ENCODE measurements at regions of chr15 and their contacts with region 1.

Region 1: DNA sequence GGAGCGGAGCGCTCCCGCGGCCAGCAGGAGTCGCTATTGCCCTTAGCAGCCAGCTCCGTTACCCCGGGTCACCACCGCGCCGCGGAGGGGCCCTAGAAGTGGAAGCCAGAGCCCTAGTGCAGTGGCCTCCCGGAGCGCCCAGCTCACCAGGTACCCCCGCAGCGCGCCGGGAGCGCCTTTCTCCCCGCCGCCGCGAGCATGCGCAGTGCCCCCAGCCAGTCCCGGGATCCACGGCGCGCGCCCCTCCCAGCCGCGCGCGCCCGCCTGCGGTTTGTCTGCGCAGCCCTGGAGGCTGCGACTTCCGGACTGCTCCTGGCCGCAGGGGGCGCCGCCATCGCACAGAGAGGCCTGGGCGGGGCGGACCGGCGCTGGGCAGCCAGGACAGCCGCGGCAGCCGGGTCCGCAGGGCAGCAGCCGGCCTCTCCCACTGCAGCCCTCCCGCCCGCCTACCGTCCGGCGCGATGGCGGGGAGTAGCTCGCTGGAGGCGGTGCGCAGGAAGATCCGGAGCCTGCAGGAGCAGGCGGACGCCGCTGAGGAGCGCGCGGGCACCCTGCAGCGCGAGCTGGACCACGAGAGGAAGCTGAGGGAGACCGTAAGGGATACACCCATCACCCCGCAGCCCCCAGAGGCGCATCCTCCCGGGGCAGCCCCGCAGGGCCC is 5.7 kb downstream of the TPM1 start:
- DNase-seq: peak; percentile 84
- H3K4me3 Mint-ChIP-seq: peak overlapping the region; percentile 84
- H3K27ac Mint-ChIP-seq: peak overlapping the region; percentile 17
- H3K4me1 Mint-ChIP-seq: peaks cover 20% of the 10 kb centered on the region
- H3K27me3 Mint-ChIP-seq: peaks cover 30% of the 10 kb centered on the region

Region 2: GRCh38 chr15:63015618-63016017 is 32.6 kb before region 1 on chr15:
- CTCF ChIA-PET with region 1: interaction called, 10 read pairs
- intact Hi-C with region 1: no loop called
- DNase-seq: no peak
- H3K4me3 Mint-ChIP-seq: no peak overlapping the region
- H3K27ac Mint-ChIP-seq: no peak overlapping the region
- H3K4me1 Mint-ChIP-seq: no peaks in the 10 kb centered on the region
- H3K27me3 Mint-ChIP-seq: peaks cover 3% of the 10 kb centered on the region

Region 3: DNA sequence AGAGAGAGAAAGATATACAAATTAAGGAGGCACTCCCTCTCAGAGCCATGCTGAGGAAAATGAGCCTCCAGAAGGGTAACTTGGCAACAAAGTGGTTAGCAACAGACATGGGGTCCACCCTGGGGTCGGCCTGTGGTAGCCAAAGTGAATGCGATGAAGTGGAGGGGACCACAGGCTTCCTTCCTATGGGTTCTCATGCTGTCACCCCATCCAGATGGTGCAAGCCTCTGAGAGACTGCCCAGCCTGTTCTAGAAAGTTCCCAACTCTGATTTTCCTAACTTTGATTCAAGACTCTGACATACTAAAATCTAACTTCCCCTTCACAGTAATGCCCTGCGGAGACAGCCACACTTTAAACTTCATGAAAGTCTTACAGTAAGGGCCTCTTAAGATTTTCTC is 55.2 kb after region 1 on chr15:
- CTCF ChIA-PET with region 1: no interaction called
- intact Hi-C with region 1: no loop called
- DNase-seq: no peak
- H3K4me3 Mint-ChIP-seq: no peak overlapping the region
- H3K27ac Mint-ChIP-seq: no peak overlapping the region
- H3K4me1 Mint-ChIP-seq: no peaks in the 10 kb centered on the region
- H3K27me3 Mint-ChIP-seq: peaks cover 11% of the 10 kb centered on the region

Region 4: GRCh38 chr15:63121382-63122001 is 73.2 kb after region 1 on chr15 and contains the start of gene LACTB:
- CTCF ChIA-PET with region 1: interaction called, 5 read pairs
- intact Hi-C with region 1: loop called (anchors 1 kb)
- DNase-seq: peak; percentile 86
- H3K4me3 Mint-ChIP-seq: peak within 1 kb of the TSS; percentile 71
- H3K27ac Mint-ChIP-seq: peak within 1 kb of the TSS; percentile 61
- H3K4me1 Mint-ChIP-seq: peaks cover 14% of the 10 kb centered on the region
- H3K27me3 Mint-ChIP-seq: no peaks in the 10 kb centered on the region
- total RNA-seq, gene LACTB: 18.3 to 18.7 TPM

Region 5: DNA sequence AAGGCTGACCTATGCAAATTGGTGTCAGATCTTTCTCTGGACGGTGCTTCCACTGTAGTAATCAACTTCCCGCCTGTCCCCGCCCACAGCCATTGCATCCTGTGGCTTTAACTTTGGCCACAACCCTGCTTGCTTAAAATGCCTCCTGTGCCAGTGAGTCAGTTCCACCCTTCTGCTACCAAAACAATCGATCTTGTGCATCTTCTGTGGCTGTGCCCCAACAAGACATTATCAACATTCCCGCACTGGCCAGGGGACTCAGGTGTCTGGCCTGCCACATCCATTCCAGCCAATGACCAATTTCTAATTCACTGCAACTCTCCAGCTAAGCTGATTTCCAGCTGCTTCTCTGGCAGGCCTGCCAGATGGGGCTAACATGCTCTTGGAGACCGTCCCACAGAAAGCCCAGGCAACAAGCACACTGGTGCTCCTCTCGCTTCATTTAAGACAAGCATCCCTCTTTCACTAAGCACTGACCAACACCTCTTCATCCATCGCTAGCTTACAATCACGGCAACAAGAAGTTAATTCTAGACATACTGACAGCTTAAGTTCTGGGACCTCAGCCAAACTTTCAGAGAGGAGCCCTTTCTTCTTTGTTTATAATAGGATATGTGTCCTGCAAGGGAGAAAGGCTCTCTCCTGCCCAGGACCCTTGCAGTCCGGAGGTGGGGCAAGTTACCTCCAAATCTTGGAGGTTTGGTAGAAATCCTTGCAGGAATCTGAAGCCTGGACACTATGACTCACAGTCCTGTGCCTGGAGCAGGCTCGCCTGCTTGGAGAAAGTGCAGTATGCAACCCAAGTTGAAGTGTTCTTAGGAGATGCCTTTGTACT is 326.7 kb after region 1 on chr15:
- CTCF ChIA-PET with region 1: no interaction called
- intact Hi-C with region 1: loop called (anchors 1 kb)
- DNase-seq: peak; percentile 31
- H3K4me3 Mint-ChIP-seq: no peak overlapping the region
- H3K27ac Mint-ChIP-seq: no peak overlapping the region
- H3K4me1 Mint-ChIP-seq: peaks cover 37% of the 10 kb centered on the region
- H3K27me3 Mint-ChIP-seq: peaks cover 24% of the 10 kb centered on the region

Region 6: GRCh38 chr15:63436872-63437375 is 388.7 kb after region 1 on chr15:
- CTCF ChIA-PET with region 1: interaction called, 13 read pairs
- intact Hi-C with region 1: no loop called
- DNase-seq: peak; percentile 92
- H3K4me3 Mint-ChIP-seq: no peak overlapping the region
- H3K27ac Mint-ChIP-seq: peak overlapping the region; percentile 17
- H3K4me1 Mint-ChIP-seq: peaks cover 41% of the 10 kb centered on the region
- H3K27me3 Mint-ChIP-seq: no peaks in the 10 kb centered on the region